ENCODE measurements at regions of chr3 and their contacts with region 1.

Region 1: GRCh38 chr3:159828542-159828943 is 160.1 kb upstream of the IL12A start:
- DNase-seq: peak; percentile 78
- H3K4me3 ChIP-seq: no peak overlapping the region
- H3K27ac ChIP-seq: peak overlapping the region; percentile 51
- H3K4me1 ChIP-seq: peaks cover 23% of the 10 kb centered on the region
- H3K27me3 ChIP-seq: no peaks in the 10 kb centered on the region
- CTCF ChIP-seq: peak; percentile 71

Region 2: DNA sequence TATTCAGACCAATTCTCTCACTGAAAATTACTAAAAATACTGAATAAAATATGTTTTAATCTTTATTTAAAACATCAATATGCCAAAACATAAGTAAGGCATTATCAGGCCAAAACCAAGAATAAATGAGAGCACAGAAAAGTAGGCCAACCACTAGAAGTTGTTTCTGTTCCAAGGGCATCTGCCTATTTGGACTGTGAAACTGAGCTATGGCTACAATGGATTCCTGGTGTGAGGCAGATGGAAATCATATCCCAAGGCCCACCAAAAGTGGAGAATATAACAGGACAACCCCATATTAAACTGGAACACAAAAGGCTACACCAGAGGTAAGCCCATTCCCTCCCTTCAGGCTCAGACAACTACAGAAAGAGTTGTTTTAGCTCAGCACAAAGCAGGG is 142.7 kb before region 1 on chr3:
- CTCF ChIA-PET with region 1: no interaction called
- POLR2A ChIA-PET with region 1: no interaction called
- intact Hi-C with region 1: no loop called
- DNase-seq: no peak
- H3K4me3 ChIP-seq: no peak overlapping the region
- H3K27ac ChIP-seq: no peak overlapping the region
- H3K4me1 ChIP-seq: no peaks in the 10 kb centered on the region
- H3K27me3 ChIP-seq: no peaks in the 10 kb centered on the region
- CTCF ChIP-seq: no peak

Region 3: DNA sequence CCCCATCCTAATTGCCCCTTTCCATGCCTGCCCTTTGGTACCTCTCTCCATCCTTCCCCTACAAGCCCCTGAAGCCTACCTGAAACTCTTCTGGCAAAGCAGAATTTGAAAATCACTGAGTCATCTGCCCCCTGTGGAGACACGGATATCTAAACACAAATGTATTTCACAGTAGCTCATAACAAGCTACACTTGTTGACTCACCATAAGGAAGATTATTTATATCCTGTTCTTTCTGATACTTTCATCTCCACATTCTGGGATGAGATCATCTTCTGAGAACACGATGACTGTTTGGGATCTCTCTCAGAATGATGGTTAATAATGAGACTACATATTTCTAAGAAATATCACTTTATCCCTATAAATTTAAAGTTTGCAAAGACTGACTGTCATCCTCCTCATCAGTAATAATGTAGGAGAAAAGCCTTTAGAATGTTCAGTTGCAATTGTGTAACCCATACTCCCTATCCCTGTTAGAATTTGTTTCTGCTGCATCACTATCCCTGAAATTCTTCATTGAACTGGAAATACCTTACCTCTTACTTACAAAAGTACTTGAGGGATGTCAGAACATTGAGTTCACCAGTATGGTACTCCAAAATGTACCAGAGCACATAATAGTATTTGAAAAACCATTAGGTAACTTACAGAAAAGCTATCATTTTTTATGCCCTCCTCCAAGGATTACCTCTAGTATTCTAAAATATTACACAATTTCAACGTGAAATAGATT is 44.0 kb after region 1 on chr3:
- CTCF ChIA-PET with region 1: no interaction called
- POLR2A ChIA-PET with region 1: no interaction called
- intact Hi-C with region 1: loop called (anchors 2 kb)
- DNase-seq: peak; percentile 69
- H3K4me3 ChIP-seq: no peak overlapping the region
- H3K27ac ChIP-seq: no peak overlapping the region
- H3K4me1 ChIP-seq: peaks cover 22% of the 10 kb centered on the region
- H3K27me3 ChIP-seq: peaks cover 9% of the 10 kb centered on the region
- CTCF ChIP-seq: no peak

Region 4: DNA sequence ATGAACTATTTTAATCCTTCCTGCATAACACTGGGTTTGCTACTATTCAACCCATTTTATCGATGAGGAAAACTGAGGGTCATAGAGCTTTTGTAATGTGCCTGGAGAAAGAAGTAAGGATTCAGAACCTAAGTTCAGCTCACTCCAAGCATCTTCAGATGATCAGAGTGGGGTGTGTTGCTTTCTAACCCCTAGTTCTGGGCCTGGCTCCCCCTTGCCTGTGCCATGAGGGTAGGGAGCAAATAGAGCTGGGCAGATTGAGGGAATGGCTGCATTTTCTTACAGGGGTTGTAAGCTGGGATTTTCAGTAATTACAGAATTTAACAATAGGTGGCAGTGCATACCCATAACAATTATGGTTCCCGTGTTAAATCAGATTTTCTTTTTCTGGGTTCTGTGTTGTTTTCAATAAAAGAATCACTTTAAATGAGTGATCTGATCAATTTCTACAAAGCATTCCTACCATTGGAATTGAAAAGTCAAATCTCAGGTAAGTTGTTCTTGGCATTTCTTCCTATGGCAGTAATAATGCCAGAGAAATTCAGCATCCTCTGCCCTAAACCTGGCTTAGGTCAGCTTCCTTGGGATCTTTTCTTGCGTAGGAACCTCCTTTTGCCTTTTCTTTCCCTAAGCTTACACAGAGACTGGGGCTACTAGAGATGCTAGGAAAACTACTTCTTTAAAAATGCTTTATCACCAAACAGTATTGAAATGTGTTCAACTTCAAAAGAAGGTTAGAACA is 56.3 kb after region 1 on chr3:
- CTCF ChIA-PET with region 1: interaction called, 3 read pairs
- POLR2A ChIA-PET with region 1: no interaction called
- intact Hi-C with region 1: loop called (anchors 2 kb)
- DNase-seq: peak; percentile 64
- H3K4me3 ChIP-seq: no peak overlapping the region
- H3K27ac ChIP-seq: no peak overlapping the region
- H3K4me1 ChIP-seq: peaks cover 26% of the 10 kb centered on the region
- H3K27me3 ChIP-seq: peaks cover 12% of the 10 kb centered on the region
- CTCF ChIP-seq: peak; percentile 63

Region 5: DNA sequence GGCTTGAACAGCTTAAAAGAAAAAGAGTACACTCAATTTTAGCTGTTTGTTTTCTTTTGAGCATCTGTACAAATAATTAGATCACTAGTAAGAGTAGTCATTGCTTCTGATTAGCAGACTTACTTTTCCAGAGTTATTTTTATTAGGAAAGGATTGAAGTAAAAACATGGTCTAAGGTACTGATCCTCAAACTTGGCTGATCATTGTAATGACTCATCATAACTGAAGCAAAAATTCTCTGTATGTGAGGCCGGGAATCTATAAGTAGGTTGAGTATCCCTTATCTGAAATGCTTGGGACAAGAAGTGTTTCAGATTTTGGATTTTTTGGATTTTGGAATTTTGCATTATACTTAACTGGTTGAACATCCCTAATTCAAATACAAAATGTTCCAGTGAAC is 1405.0 kb after region 1 on chr3:
- CTCF ChIA-PET with region 1: no interaction called
- POLR2A ChIA-PET with region 1: no interaction called
- intact Hi-C with region 1: no loop called
- DNase-seq: no peak
- H3K4me3 ChIP-seq: no peak overlapping the region
- H3K27ac ChIP-seq: no peak overlapping the region
- H3K4me1 ChIP-seq: no peaks in the 10 kb centered on the region
- H3K27me3 ChIP-seq: no peaks in the 10 kb centered on the region
- CTCF ChIP-seq: no peak